Activated naive CD4-positive, alpha-beta T cell treated with anti-CD3 and anti-CD28 coated beads for 36 hours (primary cell): ENCODE measurements at regions of chr6 and their contacts with region 1.

Region 1: DNA sequence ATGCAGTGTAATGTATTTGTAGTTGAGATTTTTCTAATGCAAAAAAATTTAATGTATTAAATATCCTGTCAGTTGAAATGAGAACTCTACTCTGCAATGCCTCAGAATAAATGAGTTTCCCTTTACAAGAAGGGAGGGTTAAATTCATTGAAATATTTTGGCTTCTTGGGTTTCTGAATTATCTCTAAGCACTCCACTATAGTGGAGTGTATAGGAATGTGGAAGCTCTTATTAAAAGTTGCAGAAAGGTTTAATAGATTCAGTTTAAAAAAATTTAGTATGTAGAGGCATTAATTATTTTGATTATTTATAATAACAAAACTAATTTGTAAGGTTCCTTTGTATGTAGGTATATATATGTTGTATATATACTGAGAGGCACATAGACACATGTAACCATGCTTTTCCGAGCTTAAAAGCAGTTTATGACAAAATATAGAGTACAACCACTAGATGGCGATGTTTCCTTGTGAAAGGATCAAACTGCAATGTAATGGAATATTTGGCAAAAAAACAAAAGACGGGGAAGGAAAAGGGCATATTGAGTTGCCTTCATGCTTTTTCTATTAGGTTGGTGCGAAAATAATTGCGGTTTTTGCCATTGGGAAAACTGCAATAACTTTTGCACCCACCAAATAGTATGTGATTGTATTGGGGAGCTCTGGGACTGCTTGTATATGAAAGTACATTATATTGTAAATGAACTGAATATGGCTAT is 144.2 kb downstream of the MYO6 start:
- DNase-seq: no peak
- H3K4me3 Mint-ChIP-seq: no peak overlapping the region
- H3K27ac Mint-ChIP-seq: no peak overlapping the region
- H3K4me1 Mint-ChIP-seq: no peaks in the 10 kb centered on the region
- H3K27me3 Mint-ChIP-seq: no peaks in the 10 kb centered on the region

Region 2: GRCh38 chr6:75208298-75209183 is 684.7 kb before region 1 on chr6:
- CTCF ChIA-PET with region 1: no interaction called
- intact Hi-C with region 1: no loop called
- DNase-seq: peak; percentile 91
- H3K4me3 Mint-ChIP-seq: peak overlapping the region; percentile 48
- H3K27ac Mint-ChIP-seq: no peak overlapping the region
- H3K4me1 Mint-ChIP-seq: peaks cover 51% of the 10 kb centered on the region
- H3K27me3 Mint-ChIP-seq: peaks cover 68% of the 10 kb centered on the region

Region 3: DNA sequence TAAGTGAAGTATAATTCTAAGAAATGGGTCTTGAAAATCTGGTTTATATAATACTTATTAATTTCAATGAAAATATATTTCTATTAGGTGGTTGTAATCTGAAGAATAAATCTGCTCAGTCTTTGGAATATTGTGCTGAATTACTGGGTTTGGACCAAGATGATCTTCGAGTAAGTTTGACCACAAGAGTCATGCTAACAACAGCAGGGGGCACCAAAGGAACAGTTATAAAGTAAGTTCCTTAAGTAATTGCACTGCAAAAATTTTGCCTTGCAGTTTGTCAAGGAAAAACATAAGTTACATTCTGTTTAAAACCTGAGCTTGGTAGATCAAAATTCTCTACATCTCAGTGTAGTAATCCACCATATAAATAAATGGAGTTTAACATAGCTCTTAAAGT is 38.2 kb before region 1 on chr6:
- CTCF ChIA-PET with region 1: interaction called, 5 read pairs
- intact Hi-C with region 1: loop called (anchors 1 kb)
- DNase-seq: peak; percentile 46
- H3K4me3 Mint-ChIP-seq: no peak overlapping the region
- H3K27ac Mint-ChIP-seq: no peak overlapping the region
- H3K4me1 Mint-ChIP-seq: no peaks in the 10 kb centered on the region
- H3K27me3 Mint-ChIP-seq: peaks cover 8% of the 10 kb centered on the region

Region 4: DNA sequence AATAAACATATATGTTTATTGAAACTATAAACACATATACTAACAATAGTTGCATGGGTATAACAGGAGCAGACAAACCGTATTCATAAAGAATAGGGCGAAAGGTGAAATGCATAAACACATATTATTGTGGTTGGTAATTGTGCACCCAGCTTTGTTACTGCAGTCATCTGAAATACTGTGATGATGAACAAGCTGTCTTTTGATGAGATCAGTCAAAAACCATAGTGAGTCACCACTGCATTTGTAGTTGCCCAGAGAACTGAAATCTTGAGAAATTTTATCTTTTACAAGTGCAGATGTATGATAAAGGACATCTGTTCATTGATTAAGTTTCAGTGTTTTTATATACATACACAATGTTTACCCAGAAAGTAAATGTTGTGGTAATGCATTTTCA is 10.5 kb before region 1 on chr6:
- CTCF ChIA-PET with region 1: interaction called, 26 read pairs
- intact Hi-C with region 1: no loop called
- DNase-seq: no peak
- H3K4me3 Mint-ChIP-seq: no peak overlapping the region
- H3K27ac Mint-ChIP-seq: no peak overlapping the region
- H3K4me1 Mint-ChIP-seq: no peaks in the 10 kb centered on the region
- H3K27me3 Mint-ChIP-seq: no peaks in the 10 kb centered on the region

Region 5: DNA sequence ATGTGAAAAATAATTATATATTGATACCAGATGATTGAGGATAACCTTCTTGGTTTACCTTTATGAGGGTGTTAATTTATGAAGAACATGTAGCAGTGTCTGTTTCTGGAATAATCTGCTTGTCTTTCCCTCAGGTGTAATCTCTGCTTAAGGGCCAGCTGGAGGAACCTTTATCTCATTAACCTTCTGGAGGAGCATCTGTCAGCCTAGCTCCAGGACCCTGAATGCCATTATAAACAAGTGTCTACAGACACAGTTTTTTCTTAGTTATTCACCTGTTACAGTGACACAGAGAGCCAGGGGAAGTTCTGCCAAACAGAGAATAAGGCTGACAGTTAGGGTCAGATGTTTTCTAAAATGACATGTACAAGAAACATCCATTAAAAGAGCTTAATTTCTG is 179.3 kb after region 1 on chr6 and contains the start of gene IMPG1:
- CTCF ChIA-PET with region 1: no interaction called
- intact Hi-C with region 1: no loop called
- DNase-seq: no peak
- H3K4me3 Mint-ChIP-seq: no peak within 1 kb of the TSS
- H3K27ac Mint-ChIP-seq: no peak within 1 kb of the TSS
- H3K4me1 Mint-ChIP-seq: no peaks in the 10 kb centered on the region
- H3K27me3 Mint-ChIP-seq: no peaks in the 10 kb centered on the region
- total RNA-seq, gene IMPG1: not detected

Region 6: GRCh38 chr6:76861403-76861802 is 968.2 kb after region 1 on chr6:
- CTCF ChIA-PET with region 1: no interaction called
- intact Hi-C with region 1: loop called (anchors 5 kb)
- DNase-seq: peak; percentile 5
- H3K4me3 Mint-ChIP-seq: no peak overlapping the region
- H3K27ac Mint-ChIP-seq: no peak overlapping the region
- H3K4me1 Mint-ChIP-seq: no peaks in the 10 kb centered on the region
- H3K27me3 Mint-ChIP-seq: no peaks in the 10 kb centered on the region

Region 7: GRCh38 chr6:77457720-77458349 is 1564.6 kb after region 1 on chr6:
- CTCF ChIA-PET with region 1: no interaction called
- intact Hi-C with region 1: loop called (anchors 1 kb)
- DNase-seq: peak; percentile 62
- H3K4me3 Mint-ChIP-seq: no peak overlapping the region
- H3K27ac Mint-ChIP-seq: no peak overlapping the region
- H3K4me1 Mint-ChIP-seq: peaks cover 6% of the 10 kb centered on the region
- H3K27me3 Mint-ChIP-seq: peaks cover 30% of the 10 kb centered on the region